Activated T-helper 1 cell treated with anti-CD3 and anti-CD28 coated beads, Interleukin-12 subunit alpha, Interleukin-12 subunit beta, Interleukin-2, Interleukin-4 antibody, amounts not matched to agents 30 ng/mL and 10 ng/mL and 1 ng/mL, durations not matched to agents 14 hours and 24 hours and 36 hours (primary cell): ENCODE measurements at regions of chr6 and their contacts with region 1.

Region 1: DNA sequence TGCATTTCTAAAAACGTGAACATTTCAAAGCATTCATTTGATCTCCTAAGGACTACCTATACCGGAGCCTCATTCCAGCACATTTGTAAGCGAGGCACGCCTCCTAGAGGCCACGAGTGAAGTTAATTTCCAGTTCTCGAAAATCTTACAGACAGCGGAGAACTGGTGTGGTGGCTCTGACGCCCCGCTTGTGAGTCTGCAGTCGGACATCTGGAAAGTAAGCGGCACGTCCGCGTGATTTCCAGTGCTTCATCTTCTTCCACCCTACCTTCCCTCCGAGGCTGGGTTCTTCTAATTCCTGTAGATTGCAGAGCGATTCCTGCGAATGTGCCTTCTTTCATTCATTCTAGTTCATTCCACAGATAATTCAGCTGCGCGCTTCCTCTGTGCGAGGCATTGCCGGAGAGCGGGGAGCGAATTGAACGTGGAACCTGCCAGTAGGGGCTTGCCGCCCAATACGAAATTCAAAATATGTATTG is 810 bp upstream of the PRIM2 start:
- DNase-seq: peak; percentile 77
- H3K4me3 Mint-ChIP-seq: peak overlapping the region; percentile 99
- H3K27ac Mint-ChIP-seq: peak overlapping the region; percentile 94
- H3K4me1 Mint-ChIP-seq: peaks cover 36% of the 10 kb centered on the region
- H3K27me3 Mint-ChIP-seq: peaks cover 18% of the 10 kb centered on the region

Region 2: DNA sequence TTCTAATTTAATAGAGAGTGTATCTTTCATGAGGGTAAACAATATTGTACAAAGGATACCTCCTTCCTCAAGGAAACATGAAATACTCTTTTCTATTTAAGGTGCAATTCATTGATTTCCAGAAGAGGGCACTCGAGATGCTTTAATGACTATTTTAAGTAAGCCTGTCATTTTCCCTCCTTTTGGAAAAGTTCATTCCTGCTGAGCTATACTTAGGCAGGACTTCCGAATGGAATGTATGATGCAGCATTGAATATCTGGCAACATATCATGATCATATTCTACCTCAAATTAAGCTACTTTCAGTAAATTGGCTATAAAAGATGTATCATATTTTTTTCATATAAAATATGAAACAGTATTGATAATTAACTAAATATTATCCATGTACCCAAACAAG is 679.0 kb before region 1 on chr6:
- intact Hi-C with region 1: loop called (anchors 5 kb)
- DNase-seq: no peak
- H3K4me3 Mint-ChIP-seq: no peak overlapping the region
- H3K27ac Mint-ChIP-seq: no peak overlapping the region
- H3K4me1 Mint-ChIP-seq: no peaks in the 10 kb centered on the region
- H3K27me3 Mint-ChIP-seq: no peaks in the 10 kb centered on the region

Region 3: GRCh38 chr6:56902641-56903464 is 413.8 kb before region 1 on chr6:
- intact Hi-C with region 1: loop called (anchors 1 kb)
- DNase-seq: no peak
- H3K4me3 Mint-ChIP-seq: no peak overlapping the region
- H3K27ac Mint-ChIP-seq: no peak overlapping the region
- H3K4me1 Mint-ChIP-seq: peaks cover 5% of the 10 kb centered on the region
- H3K27me3 Mint-ChIP-seq: peaks cover 15% of the 10 kb centered on the region

Region 4: GRCh38 chr6:57048577-57048976 is 268.0 kb before region 1 on chr6:
- intact Hi-C with region 1: loop called (anchors 2 kb)
- DNase-seq: no peak
- H3K4me3 Mint-ChIP-seq: peak overlapping the region; percentile 84
- H3K27ac Mint-ChIP-seq: no peak overlapping the region
- H3K4me1 Mint-ChIP-seq: peaks cover 35% of the 10 kb centered on the region
- H3K27me3 Mint-ChIP-seq: peaks cover 23% of the 10 kb centered on the region

Region 5: GRCh38 chr6:57190140-57190539 is 126.5 kb before region 1 on chr6:
- intact Hi-C with region 1: loop called (anchors 1 kb)
- DNase-seq: no peak
- H3K4me3 Mint-ChIP-seq: no peak overlapping the region
- H3K27ac Mint-ChIP-seq: no peak overlapping the region
- H3K4me1 Mint-ChIP-seq: peaks cover 11% of the 10 kb centered on the region
- H3K27me3 Mint-ChIP-seq: no peaks in the 10 kb centered on the region